Naive thymus-derived CD4-positive, alpha-beta T cell (primary cell): ENCODE measurements at regions of chr12 and their contacts with region 1.

Region 1: GRCh38 chr12:54201001-54201794 is 12.4 kb upstream of the SMUG1 start:
- DNase-seq: peak; percentile 45 to 70 (median 59)
- ATAC-seq: peak; percentile 94
- H3K4me3 ChIP-seq: no peak overlapping the region
- H3K4me3 Mint-ChIP-seq: no peak overlapping the region
- H3K27ac ChIP-seq: no peak overlapping the region
- H3K27ac Mint-ChIP-seq: no peak overlapping the region
- H3K4me1 ChIP-seq: no peaks in the 10 kb centered on the region
- H3K4me1 Mint-ChIP-seq: no peaks in the 10 kb centered on the region
- H3K27me3 ChIP-seq: peaks cover 6 to 16% of the 10 kb centered on the region in 2 donors
- H3K27me3 Mint-ChIP-seq: peaks cover 70 to 81% (median 73%) of the 10 kb centered on the region in 5 donors

Region 2: GRCh38 chr12:53618275-53618674 is 582.9 kb before region 1 on chr12:
- CTCF ChIA-PET with region 1: no interaction called
- POLR2A ChIA-PET with region 1: no interaction called
- intact Hi-C with region 1: no loop called
- DNase-seq: no peak
- ATAC-seq: no peak
- H3K4me3 ChIP-seq: no peak overlapping the region
- H3K4me3 Mint-ChIP-seq: peak overlapping the region in 9 of 10 donors; percentile 66 to 86 (median 82)
- H3K27ac ChIP-seq: peak overlapping the region; percentile 44
- H3K27ac Mint-ChIP-seq: peak overlapping the region; percentile 4 to 73 (median 56)
- H3K4me1 ChIP-seq: peaks cover 0 to 9% of the 10 kb centered on the region in 2 donors
- H3K4me1 Mint-ChIP-seq: peaks cover 18 to 57% (median 38%) of the 10 kb centered on the region in 7 donors
- H3K27me3 ChIP-seq: no peaks in the 10 kb centered on the region
- H3K27me3 Mint-ChIP-seq: no peaks in the 10 kb centered on the region

Region 3: GRCh38 chr12:54214553-54215406 is 13.6 kb after region 1 on chr12:
- CTCF ChIA-PET with region 1: interaction called, 15 read pairs
- POLR2A ChIA-PET with region 1: no interaction called
- intact Hi-C with region 1: loop called in 1 of 2 experiments (anchors 1 kb)
- DNase-seq: peak; percentile 80 to 90 (median 89)
- ATAC-seq: peak; percentile 95
- H3K4me3 ChIP-seq: peak overlapping the region; percentile 56
- H3K4me3 Mint-ChIP-seq: peak overlapping the region; percentile 72 to 93 (median 82)
- H3K27ac ChIP-seq: no peak overlapping the region
- H3K27ac Mint-ChIP-seq: peak overlapping the region in 2 of 9 donors; percentile 28 to 52
- H3K4me1 ChIP-seq: peaks cover 25 to 35% of the 10 kb centered on the region in 2 donors
- H3K4me1 Mint-ChIP-seq: peaks cover 18 to 52% (median 31%) of the 10 kb centered on the region in 7 donors
- H3K27me3 ChIP-seq: no peaks in the 10 kb centered on the region
- H3K27me3 Mint-ChIP-seq: peaks cover 0 to 40% (median 5%) of the 10 kb centered on the region in 5 donors